Natural killer cell (primary cell): ENCODE measurements at regions of chr1 and their contacts with region 1.

Region 1: GRCh38 chr1:44674113-44675000 is at the starts of genes ARMH1 and TMEM53:
- DNase-seq: peak; percentile 96 to 97
- ATAC-seq: peak; percentile 88 to 98 (median 91)
- H3K4me3 ChIP-seq: peak within 1 kb of the TSS; percentile 94
- H3K4me3 Mint-ChIP-seq: peak within 1 kb of the TSS; percentile 94
- H3K27ac ChIP-seq: peak within 1 kb of the TSS; percentile 94
- H3K27ac Mint-ChIP-seq: peak within 1 kb of the TSS; percentile 88 to 92
- H3K4me1 ChIP-seq: peaks cover 37% of the 10 kb centered on the region
- H3K4me1 Mint-ChIP-seq: peaks cover 28 to 29% of the 10 kb centered on the region in 2 donors
- H3K27me3 ChIP-seq: no peaks in the 10 kb centered on the region
- H3K27me3 Mint-ChIP-seq: no peaks in the 10 kb centered on the region
- CTCF ChIP-seq: no peak
- total RNA-seq, gene ARMH1: 1.5 to 25.5 (median 5.0) TPM
- total RNA-seq, gene TMEM53: 2.2 to 3.8 (median 3.3) TPM

Region 2: GRCh38 chr1:44631647-44632539 is 42.5 kb before region 1 on chr1:
- intact Hi-C with region 1: loop called (anchors 5 kb)
- DNase-seq: peak; percentile 90
- ATAC-seq: peak; percentile 79 to 87 (median 82)
- H3K4me3 ChIP-seq: peak overlapping the region; percentile 79
- H3K4me3 Mint-ChIP-seq: peak overlapping the region; percentile 75
- H3K27ac ChIP-seq: peak overlapping the region; percentile 98
- H3K27ac Mint-ChIP-seq: peak overlapping the region; percentile 79 to 96
- H3K4me1 ChIP-seq: peaks cover 17% of the 10 kb centered on the region
- H3K4me1 Mint-ChIP-seq: peaks cover 41 to 45% of the 10 kb centered on the region in 2 donors
- H3K27me3 ChIP-seq: no peaks in the 10 kb centered on the region
- H3K27me3 Mint-ChIP-seq: no peaks in the 10 kb centered on the region
- CTCF ChIP-seq: no peak

Region 3: GRCh38 chr1:44721485-44722361 is 47.4 kb after region 1 on chr1:
- intact Hi-C with region 1: loop called (anchors 1 kb)
- DNase-seq: peak; percentile 25 to 89
- ATAC-seq: peak; percentile 81 to 95 (median 89)
- H3K4me3 ChIP-seq: no peak overlapping the region
- H3K4me3 Mint-ChIP-seq: peak overlapping the region; percentile 66
- H3K27ac ChIP-seq: peak overlapping the region; percentile 75
- H3K27ac Mint-ChIP-seq: peak overlapping the region; percentile 93 to 95
- H3K4me1 ChIP-seq: peaks cover 47% of the 10 kb centered on the region
- H3K4me1 Mint-ChIP-seq: peaks cover 41 to 49% of the 10 kb centered on the region in 2 donors
- H3K27me3 ChIP-seq: no peaks in the 10 kb centered on the region
- H3K27me3 Mint-ChIP-seq: no peaks in the 10 kb centered on the region
- CTCF ChIP-seq: no peak

Region 4: DNA sequence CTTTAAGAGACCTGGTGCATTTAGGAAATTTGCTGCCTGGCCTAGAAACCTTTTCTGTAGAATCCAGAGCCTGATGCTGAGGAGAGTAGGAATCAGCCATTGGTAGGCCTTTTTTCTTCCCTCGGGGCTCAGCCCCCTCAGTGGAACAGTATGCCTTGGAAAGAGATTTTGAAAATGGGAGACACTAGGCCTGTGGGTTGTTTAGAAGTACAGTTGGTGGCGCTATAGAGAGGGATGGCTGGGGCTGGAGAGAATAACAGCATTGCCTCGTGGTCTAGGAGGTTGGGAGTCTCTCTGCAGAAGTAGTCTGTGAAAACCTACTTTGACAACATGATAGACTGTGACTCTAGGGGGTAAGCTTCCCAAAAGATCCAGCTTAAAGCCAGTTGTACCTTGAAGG is 73.5 kb after region 1 on chr1:
- intact Hi-C with region 1: no loop called
- DNase-seq: no peak
- ATAC-seq: no peak
- H3K4me3 ChIP-seq: no peak overlapping the region
- H3K4me3 Mint-ChIP-seq: no peak overlapping the region
- H3K27ac ChIP-seq: no peak overlapping the region
- H3K27ac Mint-ChIP-seq: no peak overlapping the region
- H3K4me1 ChIP-seq: no peaks in the 10 kb centered on the region
- H3K4me1 Mint-ChIP-seq: no peaks in the 10 kb centered on the region
- H3K27me3 ChIP-seq: no peaks in the 10 kb centered on the region
- H3K27me3 Mint-ChIP-seq: no peaks in the 10 kb centered on the region
- CTCF ChIP-seq: no peak